ENCODE measurements at regions of chr6 and their contacts with region 1.

Region 1: DNA sequence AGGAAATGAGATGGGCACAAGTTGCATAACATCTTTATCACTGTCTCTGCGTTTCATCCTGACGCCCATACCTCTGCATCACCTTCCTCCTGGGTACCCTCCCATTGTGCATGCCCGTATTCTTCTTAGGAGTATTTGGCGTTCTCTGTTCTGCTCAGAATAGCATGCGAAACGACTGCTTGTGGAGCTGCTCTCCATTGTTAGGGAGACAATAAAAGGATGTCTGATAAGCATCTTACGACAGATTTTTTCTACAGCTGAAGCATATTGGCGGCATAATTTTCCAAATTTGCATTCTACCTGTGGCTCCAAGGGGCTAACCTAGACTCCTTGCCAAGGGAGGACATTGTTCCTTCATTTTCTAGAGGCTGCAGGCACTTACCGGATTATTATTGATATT is 118.6 kb downstream of the EDN1 start:
- DNase-seq: no peak
- ATAC-seq: no peak

Region 2: GRCh38 chr6:12309070-12309469 is 99.7 kb before region 1 on chr6:
- intact Hi-C with region 1: loop called (anchors 5 kb)
- DNase-seq: no peak
- ATAC-seq: no peak

Measured in Right ventricle myocardium inferior (tissue), 1 donor.